ENCODE measurements at regions of chr12 and their contacts with region 1.

Region 1: DNA sequence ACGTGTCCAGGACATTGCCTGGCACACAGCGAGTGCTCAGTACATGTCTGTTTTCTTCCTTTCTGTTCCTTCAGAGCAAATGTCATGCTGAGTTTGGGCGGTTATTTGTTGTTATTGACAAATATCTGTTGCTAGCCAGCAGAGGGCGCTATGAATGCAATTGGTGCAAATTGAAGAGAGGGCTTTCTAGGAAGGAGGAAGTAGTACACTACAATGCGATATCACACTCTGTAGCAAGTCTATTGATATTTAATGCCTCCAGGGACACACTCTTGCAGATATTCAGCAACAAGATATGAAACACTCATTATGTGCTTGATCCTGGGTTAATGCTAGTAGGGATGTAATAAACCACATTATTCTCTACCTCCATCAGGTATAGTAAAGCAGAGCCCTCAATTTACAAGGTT is 267.3 kb upstream of the SRRM4 start:
- DNase-seq: peak; percentile 71
- H3K4me3 ChIP-seq: no peak overlapping the region
- H3K27ac ChIP-seq: no peak overlapping the region
- H3K4me1 ChIP-seq: no peaks in the 10 kb centered on the region
- CTCF ChIP-seq: peak; percentile 92

Region 2: DNA sequence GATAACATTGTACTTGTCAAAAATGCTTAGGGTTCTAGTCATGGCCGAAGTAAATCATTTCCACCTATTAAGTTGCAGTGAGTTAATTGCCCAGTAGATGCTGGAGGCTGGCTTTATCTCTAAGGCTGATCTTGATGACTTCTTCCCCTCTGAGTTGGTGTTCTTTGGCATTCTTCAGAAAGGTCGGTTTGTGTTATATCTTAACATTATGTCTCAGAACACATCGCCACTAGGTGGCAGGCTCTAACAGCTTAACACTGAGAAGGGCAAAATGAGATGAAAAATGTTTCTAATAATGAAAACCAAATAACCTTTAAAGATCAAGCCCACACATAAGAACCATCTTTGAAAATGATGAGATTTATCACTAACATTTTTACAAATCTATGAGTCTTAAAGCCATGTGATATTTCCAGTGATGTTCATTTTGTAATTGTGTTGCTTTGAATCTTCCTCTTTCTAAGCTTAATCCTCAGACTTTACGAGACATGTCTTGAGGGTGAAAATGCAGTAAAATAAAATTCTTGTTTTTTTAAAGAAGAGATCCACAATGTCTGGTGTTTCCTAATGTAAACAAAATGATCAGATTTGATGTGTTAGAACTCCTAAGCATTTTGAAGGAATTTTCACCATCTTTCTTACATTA is 309.1 kb before region 1 on chr12:
- CTCF ChIA-PET with region 1: no interaction called
- POLR2A ChIA-PET with region 1: interaction called, 3 read pairs
- intact Hi-C with region 1: loop called (anchors 10 kb)
- DNase-seq: peak; percentile 63
- H3K4me3 ChIP-seq: no peak overlapping the region
- H3K27ac ChIP-seq: no peak overlapping the region
- H3K4me1 ChIP-seq: no peaks in the 10 kb centered on the region
- CTCF ChIP-seq: peak; percentile 98

Region 3: DNA sequence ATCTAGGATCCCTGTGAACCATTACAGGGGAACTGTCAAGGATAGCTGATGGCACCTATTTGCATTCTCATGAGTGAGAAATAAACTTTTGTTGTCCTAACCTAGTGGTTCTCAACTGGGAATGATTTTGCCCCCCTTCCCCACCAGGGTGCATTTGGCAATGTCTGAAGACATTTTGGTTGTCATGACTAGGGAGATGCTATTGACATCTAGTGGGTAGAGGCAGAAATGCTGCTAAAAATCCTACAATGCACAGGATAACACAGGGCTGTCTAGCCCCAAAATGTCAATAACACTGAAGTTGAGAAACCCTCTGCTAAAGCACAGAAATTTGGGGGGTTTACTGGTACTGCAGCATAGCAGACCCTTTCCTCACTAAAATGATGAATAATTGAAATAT is 126.3 kb after region 1 on chr12:
- CTCF ChIA-PET with region 1: no interaction called
- POLR2A ChIA-PET with region 1: no interaction called
- intact Hi-C with region 1: loop called (anchors 10 kb)
- DNase-seq: peak; percentile 7
- H3K4me3 ChIP-seq: no peak overlapping the region
- H3K27ac ChIP-seq: no peak overlapping the region
- H3K4me1 ChIP-seq: no peaks in the 10 kb centered on the region
- CTCF ChIP-seq: peak; percentile 64

Measured in OCI-LY7 (cell line).